PC-9 (cell line): ENCODE measurements at regions of chr14 and their contacts with region 1.

Region 1: DNA sequence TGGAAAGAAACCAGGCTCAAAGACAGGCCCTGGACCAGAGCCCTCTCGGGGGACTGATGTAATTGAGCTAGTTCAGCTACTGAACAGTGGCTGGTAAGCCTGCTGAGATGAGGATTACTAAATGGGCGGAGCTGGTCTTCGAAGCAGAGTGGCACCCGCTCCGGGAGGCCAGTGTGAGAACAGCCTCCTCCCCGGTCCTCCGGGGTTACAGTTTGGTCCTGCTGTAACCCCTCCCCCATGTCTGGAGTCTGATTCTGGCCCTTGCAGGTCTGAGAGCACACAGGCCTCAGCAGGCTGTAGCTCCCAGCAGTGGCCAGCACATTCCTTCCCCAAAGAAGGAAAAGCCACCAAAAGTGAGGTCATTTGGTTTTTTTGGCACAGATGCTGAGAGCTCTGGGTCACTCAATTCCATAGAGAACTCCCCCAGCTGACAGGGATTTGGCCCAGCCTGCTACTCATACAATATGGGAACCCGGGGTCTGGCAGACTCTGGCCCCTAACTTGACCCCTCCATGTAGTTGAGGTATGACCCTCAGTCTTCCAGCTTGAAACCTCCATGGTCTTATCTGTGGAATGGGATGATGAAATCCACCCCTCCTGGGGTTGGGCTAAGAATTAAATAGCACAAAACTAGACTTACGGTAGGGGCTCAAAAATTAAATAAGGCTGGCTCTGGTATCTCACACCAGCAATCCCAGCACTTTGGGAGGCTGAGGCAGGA is 39.0 kb downstream of the ACTN1 start:
- DNase-seq: peak; percentile 76 to 80
- H3K4me3 ChIP-seq: no peak overlapping the region
- H3K27ac ChIP-seq: peak overlapping the region; percentile 40
- H3K4me1 ChIP-seq: peaks cover 78% of the 10 kb centered on the region
- H3K27me3 ChIP-seq: no peaks in the 10 kb centered on the region
- CTCF ChIP-seq: no peak

Region 2: GRCh38 chr14:68862954-68863594 is 77.0 kb before region 1 on chr14:
- CTCF ChIA-PET with region 1: no interaction called
- POLR2A ChIA-PET with region 1: no interaction called
- intact Hi-C with region 1: loop called (anchors 1 kb)
- DNase-seq: peak; percentile 66 to 81
- H3K4me3 ChIP-seq: no peak overlapping the region
- H3K27ac ChIP-seq: no peak overlapping the region
- H3K4me1 ChIP-seq: peaks cover 5% of the 10 kb centered on the region; the same call in 1 of the 2 replicates
- H3K27me3 ChIP-seq: no peaks in the 10 kb centered on the region
- CTCF ChIP-seq: peak; percentile 86

Region 3: DNA sequence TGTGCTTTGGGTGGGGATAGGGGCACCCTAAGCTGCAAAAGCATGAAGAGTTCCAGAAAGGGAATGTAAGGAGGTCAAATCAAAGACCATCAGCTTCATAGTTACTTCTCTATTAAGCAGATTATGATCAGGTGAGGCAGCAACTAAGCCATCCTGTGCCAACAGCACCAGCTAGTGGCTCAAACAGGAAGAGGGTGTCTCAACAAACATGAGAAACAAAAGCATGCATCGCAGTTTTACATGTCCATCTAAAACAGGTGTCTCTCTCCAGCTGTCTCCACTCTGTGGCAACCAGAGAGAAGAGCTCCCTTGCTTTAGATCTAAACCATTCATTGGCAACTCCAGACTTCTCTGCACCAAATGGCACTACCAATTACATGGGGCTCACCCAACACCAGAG is 13.8 kb before region 1 on chr14:
- CTCF ChIA-PET with region 1: interaction called, 19 read pairs
- POLR2A ChIA-PET with region 1: interaction called, 15 read pairs
- intact Hi-C with region 1: loop called (anchors 1 kb)
- DNase-seq: no peak
- H3K4me3 ChIP-seq: no peak overlapping the region
- H3K27ac ChIP-seq: peak overlapping the region; percentile 70
- H3K4me1 ChIP-seq: peaks cover 47% of the 10 kb centered on the region
- H3K27me3 ChIP-seq: no peaks in the 10 kb centered on the region
- CTCF ChIP-seq: peak; percentile 58

Region 4: GRCh38 chr14:68966872-68967301 is 26.8 kb after region 1 on chr14:
- CTCF ChIA-PET with region 1: interaction called, 7 read pairs
- POLR2A ChIA-PET with region 1: interaction called, 7 read pairs
- intact Hi-C with region 1: loop called (anchors 1 kb)
- DNase-seq: peak in 1 of 2 experiments; percentile 67
- H3K4me3 ChIP-seq: no peak overlapping the region
- H3K27ac ChIP-seq: peak overlapping the region; percentile 18; the same call in 1 of the 2 replicates
- H3K4me1 ChIP-seq: peaks cover 52% of the 10 kb centered on the region
- H3K27me3 ChIP-seq: no peaks in the 10 kb centered on the region
- CTCF ChIP-seq: no peak

Region 5: GRCh38 chr14:69090187-69090789 is 150.2 kb after region 1 on chr14:
- CTCF ChIA-PET with region 1: no interaction called
- POLR2A ChIA-PET with region 1: interaction called, 4 read pairs
- intact Hi-C with region 1: loop called (anchors 1 kb)
- DNase-seq: peak; percentile 47 to 68
- H3K4me3 ChIP-seq: no peak overlapping the region
- H3K27ac ChIP-seq: no peak overlapping the region
- H3K4me1 ChIP-seq: peaks cover 20% of the 10 kb centered on the region
- H3K27me3 ChIP-seq: no peaks in the 10 kb centered on the region
- CTCF ChIP-seq: peak; percentile 95